PC-9 (cell line): ENCODE measurements at regions of chr17 and their contacts with region 1.

Region 1: DNA sequence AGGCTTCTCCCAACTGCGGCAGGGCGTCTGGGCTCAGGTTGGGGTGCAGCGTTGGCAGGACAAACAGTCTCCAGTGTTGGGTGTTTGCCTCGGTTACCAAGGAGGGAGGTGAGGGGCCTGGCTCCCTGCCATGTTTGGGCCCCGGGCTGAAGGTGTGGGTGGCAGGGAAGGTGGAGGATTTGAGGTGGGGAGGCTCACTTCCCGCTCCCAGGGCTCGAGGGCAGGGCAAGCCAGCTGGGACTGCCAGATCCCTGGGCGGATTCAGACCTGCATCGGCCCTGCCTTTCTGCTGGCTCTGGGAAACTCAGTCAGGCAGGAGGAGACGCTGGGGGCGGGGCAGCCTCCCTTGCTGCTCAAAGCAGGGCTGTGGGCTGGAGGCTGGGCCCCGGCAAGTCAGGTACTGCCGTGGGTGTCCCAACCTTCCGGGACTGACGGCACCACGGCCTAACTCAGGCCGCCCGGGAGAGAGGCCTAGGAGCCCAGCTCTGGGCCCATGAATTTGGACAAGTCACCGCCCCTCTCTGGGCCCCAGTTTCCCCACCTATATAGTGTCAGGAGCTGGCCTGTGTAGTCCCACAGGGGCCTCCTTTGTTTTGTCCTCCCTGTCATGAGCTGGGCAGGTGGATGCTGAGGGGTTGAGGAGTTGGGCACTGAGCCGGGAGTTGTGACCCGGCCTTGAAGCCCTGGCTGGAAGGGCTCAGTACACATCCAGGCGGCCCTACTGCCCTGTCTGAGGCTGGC is 31.4 kb upstream of the KRT17 start:
- DNase-seq: peak; percentile 96 to 97
- H3K4me3 ChIP-seq: peak overlapping the region; percentile 31; the same call in 1 of the 2 replicates
- H3K27ac ChIP-seq: peak overlapping the region; percentile 98
- H3K4me1 ChIP-seq: peaks cover 69% of the 10 kb centered on the region
- H3K27me3 ChIP-seq: no peaks in the 10 kb centered on the region
- CTCF ChIP-seq: no peak

Region 2: GRCh38 chr17:40303009-40303657 is 1352.6 kb before region 1 on chr17:
- CTCF ChIA-PET with region 1: interaction called, 19 read pairs
- POLR2A ChIA-PET with region 1: no interaction called
- intact Hi-C with region 1: no loop called
- DNase-seq: peak in 1 of 2 experiments; percentile 48
- H3K4me3 ChIP-seq: no peak overlapping the region
- H3K27ac ChIP-seq: no peak overlapping the region
- H3K4me1 ChIP-seq: peaks cover 47% of the 10 kb centered on the region
- H3K27me3 ChIP-seq: no peaks in the 10 kb centered on the region
- CTCF ChIP-seq: peak; percentile 83

Region 3: DNA sequence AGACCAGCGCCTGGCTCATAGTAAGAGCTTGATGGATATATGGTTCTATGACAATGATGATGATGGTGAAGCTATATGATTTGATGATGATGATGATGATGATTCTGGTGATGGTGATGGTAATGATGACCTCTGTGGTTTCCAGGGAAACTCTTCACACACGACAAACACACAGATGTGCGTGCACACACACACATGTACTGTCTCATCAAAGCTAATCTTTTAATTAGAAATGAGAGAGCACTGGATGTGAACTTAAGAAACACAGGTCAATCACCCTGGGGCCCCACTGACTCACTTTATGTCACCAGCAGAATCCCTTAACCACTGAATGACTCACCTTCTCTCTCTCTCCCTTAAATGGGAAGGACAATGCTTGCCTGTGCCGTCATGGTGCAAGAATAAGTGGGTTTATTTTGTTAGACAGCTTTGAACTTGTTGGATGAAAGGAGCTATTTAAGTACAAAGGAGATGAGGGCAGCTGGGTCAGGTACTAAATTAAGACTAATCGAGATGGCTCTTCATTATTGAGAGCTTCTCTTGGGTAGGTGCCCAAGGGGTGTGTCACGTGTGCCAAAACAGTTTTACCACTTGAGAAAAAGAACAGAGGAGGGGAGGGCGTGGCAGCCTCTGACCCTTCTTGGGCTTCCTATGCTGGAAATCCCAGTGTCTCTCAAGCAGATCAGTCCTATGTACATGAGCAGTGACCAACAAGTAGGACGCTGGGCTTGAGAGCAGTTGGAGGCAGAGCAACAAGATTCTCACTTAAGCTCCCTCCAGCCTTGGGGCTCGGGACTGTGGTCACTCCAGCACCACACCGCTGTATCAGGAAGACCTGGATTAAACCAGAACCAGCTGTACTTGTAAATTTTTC is 251.7 kb before region 1 on chr17:
- CTCF ChIA-PET with region 1: no interaction called
- POLR2A ChIA-PET with region 1: interaction called, 3 read pairs
- intact Hi-C with region 1: loop called (anchors 5 kb)
- DNase-seq: peak; percentile 66 to 97
- H3K4me3 ChIP-seq: no peak overlapping the region
- H3K27ac ChIP-seq: peak overlapping the region; percentile 89
- H3K4me1 ChIP-seq: peaks cover 48% of the 10 kb centered on the region
- H3K27me3 ChIP-seq: no peaks in the 10 kb centered on the region
- CTCF ChIP-seq: no peak

Region 4: DNA sequence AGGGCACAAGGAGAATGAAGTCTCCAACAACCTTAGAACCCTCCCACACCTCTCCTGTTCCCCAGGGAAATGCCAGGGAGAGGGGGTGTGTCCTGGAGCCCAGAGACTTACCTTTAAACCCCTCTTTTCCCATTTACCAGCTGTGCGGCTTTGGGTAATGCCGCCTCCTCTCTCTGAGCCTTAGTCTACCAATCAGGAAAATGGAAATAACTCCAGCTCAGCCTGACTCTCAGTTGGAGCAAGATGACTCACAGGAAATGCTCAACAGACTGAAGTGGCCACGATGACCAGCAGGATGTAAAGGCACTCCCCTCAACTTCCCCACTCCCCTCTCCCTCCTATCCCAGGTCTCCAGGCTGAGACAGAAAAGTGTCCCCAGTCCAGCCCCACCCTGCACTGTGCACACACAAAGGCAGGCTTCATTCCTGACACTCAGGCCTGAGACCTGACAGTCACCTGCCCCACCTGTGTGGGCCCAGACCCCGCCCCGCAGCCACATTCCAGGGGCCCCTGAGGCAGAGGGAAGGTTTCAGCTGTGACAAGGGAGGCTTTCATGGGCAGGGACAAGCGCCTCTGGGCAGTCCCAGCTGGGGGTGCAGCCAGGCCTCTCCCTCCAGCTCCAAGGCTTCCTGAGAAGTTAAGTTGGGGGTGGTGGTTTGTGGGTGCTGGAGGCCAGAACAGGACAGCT is 134.1 kb before region 1 on chr17:
- CTCF ChIA-PET with region 1: no interaction called
- POLR2A ChIA-PET with region 1: interaction called, 23 read pairs
- intact Hi-C with region 1: no loop called
- DNase-seq: peak; percentile 97 to 98
- H3K4me3 ChIP-seq: peak overlapping the region; percentile 93; the same call in 1 of the 2 replicates
- H3K27ac ChIP-seq: peak overlapping the region; percentile 95
- H3K4me1 ChIP-seq: peaks cover 81% of the 10 kb centered on the region
- H3K27me3 ChIP-seq: no peaks in the 10 kb centered on the region
- CTCF ChIP-seq: no peak

Region 5: DNA sequence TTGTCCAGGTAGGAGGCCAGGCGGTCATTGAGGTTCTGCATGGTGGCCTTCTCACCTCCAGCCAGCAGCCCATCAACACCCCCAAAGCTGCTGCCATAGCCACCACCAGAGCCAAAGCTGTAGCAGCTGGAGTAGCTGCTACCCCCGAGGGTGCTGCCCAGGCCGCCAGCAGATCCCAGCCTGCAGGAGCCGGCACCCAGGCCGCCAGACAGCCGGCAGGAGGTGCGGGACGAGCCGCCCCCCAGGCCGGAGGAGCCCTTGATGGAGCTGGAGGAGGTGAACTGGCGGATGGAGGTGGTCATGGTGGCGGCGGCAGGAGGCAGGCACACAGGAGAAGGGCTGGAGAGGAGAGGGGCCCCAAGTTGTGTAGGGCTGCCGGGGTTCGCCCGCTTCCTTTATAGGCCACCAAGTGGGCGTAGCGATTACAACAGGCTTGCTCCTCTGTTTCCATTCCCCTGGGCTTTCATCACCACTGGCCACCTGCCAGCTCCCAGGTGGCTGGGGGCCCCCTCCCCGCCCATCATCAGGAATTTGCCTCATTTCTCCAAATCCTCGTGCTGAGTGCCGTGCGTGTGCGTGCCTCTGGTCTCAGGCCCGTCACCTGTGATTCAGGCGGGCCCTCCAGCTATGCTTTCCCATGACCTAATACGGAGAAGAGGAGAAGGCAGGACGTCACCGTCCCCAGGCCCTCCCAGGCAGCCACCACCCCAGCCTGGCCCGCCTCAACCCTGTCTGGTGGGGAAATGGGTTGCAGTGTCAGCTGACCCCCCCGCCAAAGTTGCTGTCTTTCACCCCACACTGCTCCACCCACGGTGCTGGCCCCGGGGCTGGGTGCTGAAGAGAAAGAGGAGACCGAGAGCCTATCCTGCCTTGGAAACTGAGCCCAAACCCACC is 31.3 kb before region 1 on chr17 and contains the start of gene KRT17:
- CTCF ChIA-PET with region 1: interaction called, 3 read pairs
- POLR2A ChIA-PET with region 1: no interaction called
- intact Hi-C with region 1: loop called (anchors 2 kb)
- DNase-seq: peak in 1 of 2 experiments; percentile 76
- H3K4me3 ChIP-seq: no peak within 1 kb of the TSS
- H3K27ac ChIP-seq: no peak within 1 kb of the TSS
- H3K4me1 ChIP-seq: peaks cover 8% of the 10 kb centered on the region
- H3K27me3 ChIP-seq: no peaks in the 10 kb centered on the region
- CTCF ChIP-seq: no peak
- total RNA-seq, gene KRT17: 29.0 and 80.8 TPM in 2 replicates

Region 6: DNA sequence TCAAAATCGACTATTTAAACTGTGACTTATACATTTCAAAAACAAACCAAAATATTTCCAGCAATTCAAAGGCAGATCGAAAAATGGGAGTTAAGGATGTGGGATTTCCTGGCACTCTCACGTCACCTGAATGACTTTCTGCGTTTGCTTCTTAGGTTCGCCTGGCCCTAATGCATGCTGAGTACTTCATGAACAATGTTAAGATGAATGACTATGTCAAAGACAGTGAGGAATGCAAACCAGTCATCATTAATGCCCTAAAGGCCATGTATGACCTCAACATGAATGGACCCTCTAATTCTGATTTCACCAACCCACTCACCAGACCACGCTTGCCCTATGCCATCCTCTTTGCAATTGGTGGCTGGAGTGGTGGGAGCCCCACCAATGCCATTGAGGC is 189.2 kb after region 1 on chr17:
- CTCF ChIA-PET with region 1: no interaction called
- POLR2A ChIA-PET with region 1: no interaction called
- intact Hi-C with region 1: no loop called
- DNase-seq: no peak
- H3K4me3 ChIP-seq: no peak overlapping the region
- H3K27ac ChIP-seq: no peak overlapping the region
- H3K4me1 ChIP-seq: no peaks in the 10 kb centered on the region
- H3K27me3 ChIP-seq: no peaks in the 10 kb centered on the region
- CTCF ChIP-seq: no peak